Activated T-helper 1 cell treated with anti-CD3 and anti-CD28 coated beads, Interleukin-12 subunit alpha, Interleukin-12 subunit beta, Interleukin-2, Interleukin-4 antibody, amounts not matched to agents 30 ng/mL and 10 ng/mL and 1 ng/mL, durations not matched to agents 14 hours and 24 hours and 36 hours (primary cell): ENCODE measurements at regions of chr11 and their contacts with region 1.

Region 1: DNA sequence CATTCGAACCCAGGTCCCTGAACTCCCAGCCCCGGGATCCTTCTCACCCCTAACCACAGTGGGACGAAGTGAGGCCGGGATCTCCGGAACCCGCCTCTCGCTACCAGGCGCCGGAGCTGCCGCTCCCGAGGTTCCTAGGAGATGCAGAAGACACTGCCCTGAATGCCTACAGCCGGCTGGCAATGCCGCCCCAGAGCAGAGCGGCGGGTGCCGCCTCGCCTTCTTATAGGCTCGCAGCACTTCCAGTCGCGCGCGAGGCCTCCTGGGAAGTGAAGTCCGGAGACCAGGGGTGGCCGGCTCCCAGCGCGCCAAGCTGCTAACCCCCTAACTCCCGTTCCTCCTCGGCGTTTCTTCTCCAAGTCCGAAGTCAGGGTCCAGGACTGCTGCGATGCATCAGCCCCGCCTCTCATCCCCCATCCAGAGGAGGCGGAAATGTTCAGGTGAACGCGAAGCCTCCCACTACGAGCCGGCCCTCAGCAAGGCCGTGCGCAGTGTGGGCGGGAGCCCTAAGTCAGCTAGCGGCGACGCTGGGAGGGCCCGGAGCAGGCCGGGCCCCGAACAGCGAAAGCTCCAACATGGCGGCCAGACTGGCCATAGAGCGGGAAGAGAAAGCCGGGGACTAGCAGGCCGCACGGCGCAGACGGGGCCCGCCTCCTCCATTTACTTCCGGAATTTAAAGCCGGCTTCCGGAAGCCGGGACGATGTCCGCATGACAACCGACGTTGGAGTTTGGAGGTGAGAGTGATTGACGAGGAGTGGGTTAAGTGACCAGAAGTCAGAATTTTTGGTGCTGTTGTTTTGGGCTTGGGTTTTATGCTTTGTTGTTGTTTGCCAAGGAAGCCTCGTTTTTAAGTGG is at the starts of genes CYB561A3 and TMEM138:
- DNase-seq: peak; percentile 90
- H3K4me3 Mint-ChIP-seq: peak within 1 kb of the TSS; percentile 98
- H3K27ac Mint-ChIP-seq: peak within 1 kb of the TSS; percentile 95
- H3K4me1 Mint-ChIP-seq: peaks cover 45% of the 10 kb centered on the region
- H3K27me3 Mint-ChIP-seq: no peaks in the 10 kb centered on the region
- total RNA-seq, gene CYB561A3: 38.1 and 42.3 TPM in 2 replicates
- total RNA-seq, gene TMEM138: 68.4 and 71.7 TPM in 2 replicates

Region 2: DNA sequence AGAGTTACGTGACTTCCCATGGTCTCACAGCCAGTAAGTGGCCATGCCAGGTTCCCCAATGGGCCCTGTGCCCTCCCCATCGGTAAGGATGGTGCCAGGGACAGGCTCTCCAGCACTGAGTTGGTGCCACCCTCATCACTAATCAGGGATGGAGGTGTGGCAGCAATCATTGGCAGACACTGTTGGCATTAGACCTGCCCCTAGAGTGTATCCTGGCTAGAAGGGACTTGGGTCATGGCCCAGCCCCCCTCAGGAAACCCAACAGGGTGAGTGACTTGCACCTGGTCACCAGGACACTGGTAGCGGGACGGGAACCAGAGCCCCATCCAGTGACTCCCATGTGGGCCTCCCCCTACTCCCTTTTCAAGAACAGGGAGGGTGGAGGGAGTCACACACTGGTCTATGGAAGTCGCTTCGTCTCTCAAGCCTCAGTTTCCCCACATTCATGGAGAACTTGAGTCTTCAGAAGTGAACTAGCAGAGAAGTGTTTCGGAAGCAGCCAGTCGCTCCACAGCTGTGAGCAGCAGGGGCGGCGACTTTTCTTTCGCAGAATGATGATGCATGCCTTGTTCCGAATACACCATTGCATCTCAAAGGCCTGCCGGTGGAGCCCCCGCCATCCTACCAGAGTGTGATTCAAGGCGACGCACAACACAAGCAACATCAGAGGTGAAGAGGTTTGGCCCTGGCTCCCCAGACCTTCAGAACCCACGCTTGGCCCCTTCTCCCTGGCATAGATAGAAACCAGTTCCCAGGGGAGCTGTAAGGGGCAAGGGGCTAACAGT is 563.9 kb before region 1 on chr11:
- intact Hi-C with region 1: no loop called
- DNase-seq: no peak
- H3K4me3 Mint-ChIP-seq: no peak overlapping the region
- H3K27ac Mint-ChIP-seq: no peak overlapping the region
- H3K4me1 Mint-ChIP-seq: no peaks in the 10 kb centered on the region
- H3K27me3 Mint-ChIP-seq: peaks cover 9% of the 10 kb centered on the region

Region 3: DNA sequence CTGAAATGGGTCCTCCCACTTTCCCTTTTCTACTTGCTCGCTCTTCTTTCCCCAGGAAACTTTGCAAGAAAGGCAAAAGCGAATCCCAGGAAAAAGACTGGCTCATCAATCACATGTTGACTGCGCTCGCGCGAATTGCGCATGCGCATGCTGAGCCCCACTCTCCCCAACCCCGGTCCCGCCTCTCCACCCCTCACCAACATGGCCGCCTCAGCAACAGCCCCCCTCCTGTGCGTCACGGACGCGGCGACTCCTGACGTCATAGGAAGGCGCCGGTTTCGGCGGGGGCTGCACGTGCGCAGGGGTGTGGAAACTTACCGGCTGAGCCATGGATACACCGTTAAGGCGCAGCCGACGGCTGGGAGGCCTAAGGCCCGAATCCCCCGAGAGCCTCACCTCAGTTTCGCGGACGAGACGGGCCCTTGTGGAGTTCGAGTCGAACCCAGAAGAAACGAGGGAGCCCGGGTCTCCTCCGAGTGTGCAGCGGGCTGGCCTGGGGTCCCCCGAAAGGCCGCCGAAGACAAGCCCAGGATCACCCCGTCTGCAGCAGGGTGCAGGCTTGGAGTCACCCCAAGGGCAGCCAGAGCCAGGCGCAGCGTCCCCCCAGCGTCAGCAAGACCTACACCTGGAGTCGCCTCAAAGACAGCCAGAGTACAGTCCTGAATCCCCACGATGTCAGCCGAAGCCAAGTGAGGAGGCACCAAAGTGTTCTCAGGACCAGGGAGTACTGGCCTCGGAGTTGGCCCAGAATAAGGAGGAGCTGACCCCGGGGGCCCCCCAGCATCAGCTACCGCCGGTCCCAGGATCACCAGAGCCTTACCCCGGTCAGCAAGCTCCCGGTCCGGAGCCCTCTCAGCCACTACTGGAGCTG is 519.9 kb before region 1 on chr11 and contains the start of gene CCDC86:
- intact Hi-C with region 1: loop called (anchors 1 kb)
- DNase-seq: peak; percentile 98
- H3K4me3 Mint-ChIP-seq: peak within 1 kb of the TSS; percentile 91
- H3K27ac Mint-ChIP-seq: peak within 1 kb of the TSS; percentile 83
- H3K4me1 Mint-ChIP-seq: peaks cover 46% of the 10 kb centered on the region
- H3K27me3 Mint-ChIP-seq: peaks cover 1% of the 10 kb centered on the region
- total RNA-seq, gene CCDC86: 88.2 and 92.2 TPM in 2 replicates

Region 4: GRCh38 chr11:61294717-61295595 is 67.0 kb before region 1 on chr11 and contains the start of gene VWCE:
- intact Hi-C with region 1: loop called (anchors 1 kb)
- DNase-seq: peak; percentile 64
- H3K4me3 Mint-ChIP-seq: peak within 1 kb of the TSS; percentile 83
- H3K27ac Mint-ChIP-seq: peak within 1 kb of the TSS; percentile 79
- H3K4me1 Mint-ChIP-seq: peaks cover 28% of the 10 kb centered on the region
- H3K27me3 Mint-ChIP-seq: peaks cover 16% of the 10 kb centered on the region
- total RNA-seq, gene VWCE: 9.4 and 10.9 TPM in 2 replicates

Region 5: DNA sequence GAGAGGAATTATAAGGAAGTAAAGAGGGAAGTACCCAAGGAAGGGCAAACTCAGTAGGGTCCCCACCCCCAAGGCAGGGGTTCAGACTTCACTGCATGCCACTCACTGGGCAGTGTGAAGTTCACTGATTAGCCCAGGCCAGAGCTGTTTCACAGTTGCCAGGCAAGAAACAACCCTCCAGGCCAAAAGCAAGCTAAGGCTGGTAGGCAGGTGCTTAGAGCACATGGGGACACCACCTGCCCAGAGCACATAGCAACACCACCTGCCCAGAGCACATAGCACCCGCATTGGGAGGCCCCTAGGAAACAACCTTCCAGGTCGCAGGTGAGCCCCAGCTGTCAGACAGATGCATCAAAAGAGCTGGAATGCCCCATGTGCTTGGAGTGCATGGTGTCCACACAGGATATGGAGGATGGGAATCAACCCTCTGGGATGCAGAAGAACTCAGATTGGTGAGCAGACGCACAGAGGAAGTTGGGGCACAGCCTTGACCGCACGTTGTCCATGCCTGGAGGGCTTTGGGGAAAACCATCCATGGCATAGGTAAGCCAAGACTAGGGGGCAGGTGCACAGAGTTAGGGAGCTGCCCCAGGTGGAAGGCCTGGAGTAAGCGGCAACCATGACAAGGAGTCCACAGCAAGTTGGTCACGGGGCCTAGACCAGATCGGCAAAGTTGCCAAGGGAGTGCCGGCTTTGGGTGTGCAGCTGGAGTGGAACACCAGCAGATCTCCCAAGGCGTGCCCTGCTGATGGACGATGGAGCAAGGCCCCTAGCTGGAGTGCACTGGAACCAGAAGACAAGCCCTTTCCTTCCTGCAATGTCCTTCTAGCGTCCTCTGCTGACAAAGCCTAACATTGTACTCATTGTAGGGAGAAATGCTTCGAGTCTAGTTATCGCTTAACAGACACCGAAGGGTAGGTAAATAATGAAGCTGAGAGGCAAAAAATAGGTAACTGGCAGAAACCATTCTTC is 22.6 kb after region 1 on chr11:
- intact Hi-C with region 1: loop called (anchors 1 kb)
- DNase-seq: no peak
- H3K4me3 Mint-ChIP-seq: no peak overlapping the region
- H3K27ac Mint-ChIP-seq: no peak overlapping the region
- H3K4me1 Mint-ChIP-seq: peaks cover 7% of the 10 kb centered on the region
- H3K27me3 Mint-ChIP-seq: no peaks in the 10 kb centered on the region

Region 6: GRCh38 chr11:61392981-61393595 is 31.2 kb after region 1 on chr11:
- intact Hi-C with region 1: loop called (anchors 1 kb)
- DNase-seq: no peak
- H3K4me3 Mint-ChIP-seq: peak overlapping the region; percentile 88
- H3K27ac Mint-ChIP-seq: peak overlapping the region; percentile 89
- H3K4me1 Mint-ChIP-seq: peaks cover 26% of the 10 kb centered on the region
- H3K27me3 Mint-ChIP-seq: no peaks in the 10 kb centered on the region

Region 7: GRCh38 chr11:61555051-61555969 is 193.4 kb after region 1 on chr11:
- intact Hi-C with region 1: no loop called
- DNase-seq: no peak
- H3K4me3 Mint-ChIP-seq: no peak overlapping the region
- H3K27ac Mint-ChIP-seq: no peak overlapping the region
- H3K4me1 Mint-ChIP-seq: peaks cover 5% of the 10 kb centered on the region
- H3K27me3 Mint-ChIP-seq: peaks cover 43% of the 10 kb centered on the region

Region 8: DNA sequence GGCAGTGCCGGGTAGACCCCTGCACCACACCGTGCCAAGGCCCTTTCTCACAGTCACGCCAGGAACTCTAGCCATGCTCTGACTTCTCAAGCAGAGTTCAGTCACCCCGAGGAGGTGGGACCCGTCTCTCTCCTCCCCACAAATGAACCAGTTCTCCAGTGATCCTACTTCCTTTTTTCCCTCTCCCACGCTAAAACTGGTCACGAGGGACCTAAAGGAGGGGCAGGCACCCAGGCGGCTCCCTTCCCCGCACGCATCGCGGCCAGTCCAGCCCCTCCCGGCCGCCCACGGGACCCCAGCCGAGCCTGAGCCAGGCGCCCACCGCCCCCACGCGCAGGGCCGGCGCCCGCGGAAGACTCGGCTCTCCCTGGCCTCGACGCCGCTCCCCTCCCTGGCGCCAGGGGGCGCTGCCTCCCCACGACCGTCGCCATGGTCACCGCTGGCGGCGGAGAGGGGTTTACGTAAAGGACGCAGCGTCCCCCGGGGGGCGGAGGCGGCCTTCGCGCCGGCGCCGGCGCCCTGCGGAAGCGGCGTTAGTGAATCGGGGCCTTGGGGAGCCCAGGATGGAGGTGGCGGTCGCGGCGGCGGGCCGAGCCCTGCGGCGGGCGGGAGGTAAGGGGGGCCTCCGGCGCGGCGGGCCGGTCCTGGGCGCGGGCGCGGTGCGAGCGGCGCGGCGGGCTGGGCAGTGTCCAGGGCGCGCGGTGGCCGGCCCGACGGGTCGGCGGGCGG is 318.1 kb after region 1 on chr11 and contains the start of gene DAGLA:
- intact Hi-C with region 1: no loop called
- DNase-seq: peak; percentile 68
- H3K4me3 Mint-ChIP-seq: peak within 1 kb of the TSS; percentile 75
- H3K27ac Mint-ChIP-seq: no peak within 1 kb of the TSS
- H3K4me1 Mint-ChIP-seq: no peaks in the 10 kb centered on the region
- H3K27me3 Mint-ChIP-seq: peaks cover 42% of the 10 kb centered on the region
- total RNA-seq, gene DAGLA: 0.18 and 0.20 TPM in 2 replicates

Region 9: DNA sequence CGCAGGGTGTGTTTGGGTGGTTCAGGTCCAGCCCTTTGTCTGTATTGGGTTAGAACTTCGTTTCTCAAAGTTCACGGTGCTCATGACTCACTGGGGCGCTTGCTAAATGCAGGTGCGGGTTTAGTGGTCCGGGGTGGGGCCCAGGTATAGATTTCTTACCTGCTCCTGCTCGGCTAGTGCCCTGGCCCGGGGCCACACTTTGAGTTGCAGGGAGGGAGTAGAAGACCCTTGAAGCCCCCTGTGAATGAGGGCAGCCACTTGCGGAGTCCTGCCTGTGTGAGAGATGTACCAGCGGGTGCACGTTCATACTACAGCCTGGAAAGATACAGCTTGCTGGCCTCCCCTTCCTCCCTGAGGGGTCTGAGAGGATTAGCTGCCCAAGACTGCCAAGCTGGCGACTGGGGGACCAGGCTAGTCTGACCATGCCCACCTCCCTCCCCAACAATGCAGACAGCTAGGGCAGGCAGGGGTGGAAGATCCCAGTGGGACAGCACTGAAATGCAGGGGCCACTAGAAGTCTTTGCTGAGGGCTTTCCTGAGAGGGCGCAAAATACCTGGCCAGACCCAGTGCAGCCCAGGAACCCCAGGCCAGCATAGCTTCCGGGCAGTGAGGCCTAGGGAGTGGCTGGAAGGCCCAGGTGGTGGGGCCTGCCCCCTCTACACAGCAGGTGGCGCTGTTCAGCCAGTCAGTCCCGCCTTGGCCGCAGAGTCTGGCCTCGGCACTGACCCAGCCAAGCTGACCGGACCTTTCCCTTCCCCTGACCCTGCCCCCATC is 385.5 kb after region 1 on chr11:
- intact Hi-C with region 1: no loop called
- DNase-seq: peak; percentile 39
- H3K4me3 Mint-ChIP-seq: no peak overlapping the region
- H3K27ac Mint-ChIP-seq: no peak overlapping the region
- H3K4me1 Mint-ChIP-seq: no peaks in the 10 kb centered on the region
- H3K27me3 Mint-ChIP-seq: peaks cover 16% of the 10 kb centered on the region